HEK293 (cell line): ENCODE measurements at regions of chr10 and their contacts with region 1.

Region 1: DNA sequence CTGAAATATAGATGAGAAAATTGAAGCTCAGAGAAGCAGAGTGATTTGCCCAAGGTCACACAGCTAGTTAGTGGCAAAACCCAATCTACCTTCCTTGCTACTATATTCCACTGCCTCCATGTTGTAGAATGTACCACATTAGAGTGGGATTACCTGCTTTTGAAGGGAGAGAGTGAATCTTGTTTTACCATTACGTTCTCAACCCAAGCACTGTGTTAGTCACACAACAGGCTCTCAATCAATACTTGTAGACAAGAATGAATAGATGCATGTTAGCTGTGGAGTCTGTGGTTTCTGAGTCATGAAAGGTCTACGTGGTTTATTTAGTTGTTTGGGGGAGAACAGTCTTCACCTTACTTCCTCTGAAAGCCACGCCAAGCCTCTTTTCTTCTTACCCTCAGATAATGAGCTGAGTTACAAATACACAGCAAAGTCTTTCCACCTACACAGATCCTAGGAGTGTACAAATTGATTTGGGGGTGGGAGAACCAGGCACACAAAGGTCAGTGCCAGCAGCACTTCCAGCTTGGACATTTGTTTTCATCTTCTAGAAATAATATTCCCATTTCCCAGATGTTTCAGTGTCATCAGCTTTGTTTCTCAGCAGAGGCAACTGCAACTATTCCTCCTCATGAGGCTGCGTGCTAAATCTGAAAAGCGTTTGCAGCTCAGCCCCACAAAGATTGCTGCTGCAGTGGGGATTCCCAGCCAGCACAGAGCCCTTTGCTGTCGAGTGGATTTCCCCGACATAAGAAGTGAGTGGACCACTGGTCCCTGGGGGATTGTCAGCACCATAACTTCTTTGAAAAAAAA is 71.5 kb upstream of the ADO start:
- H3K4me3 ChIP-seq: no peak overlapping the region
- H3K27ac ChIP-seq: no peak overlapping the region
- H3K4me1 ChIP-seq: no peaks in the 10 kb centered on the region
- CTCF ChIP-seq: no peak

Region 2: DNA sequence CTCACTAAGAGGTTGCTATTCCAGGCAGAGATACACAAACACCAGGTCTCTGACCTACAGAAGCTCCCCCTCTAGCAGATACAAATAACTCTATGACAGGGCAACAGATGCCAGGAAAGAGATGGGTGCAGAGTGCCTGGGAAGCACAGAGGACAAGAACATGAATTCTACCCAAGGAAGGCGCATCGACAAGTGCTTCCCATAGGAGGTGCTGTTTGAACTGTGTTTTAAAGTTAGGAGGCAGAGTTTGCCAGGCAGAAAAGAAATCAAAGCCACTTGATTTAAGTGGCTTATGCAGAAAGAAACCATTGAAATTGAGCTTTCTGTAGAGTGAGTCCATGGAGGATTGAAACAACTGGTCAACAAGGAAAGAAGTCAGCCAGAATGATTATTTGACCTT is 118.4 kb after region 1 on chr10:
- CTCF ChIA-PET with region 1: no interaction called
- POLR2A ChIA-PET with region 1: interaction called, 10 read pairs
- H3K4me3 ChIP-seq: no peak overlapping the region
- H3K27ac ChIP-seq: no peak overlapping the region
- H3K4me1 ChIP-seq: no peaks in the 10 kb centered on the region
- CTCF ChIP-seq: no peak